ENCODE measurements at regions of chr1 and their contacts with region 1.

Region 1: DNA sequence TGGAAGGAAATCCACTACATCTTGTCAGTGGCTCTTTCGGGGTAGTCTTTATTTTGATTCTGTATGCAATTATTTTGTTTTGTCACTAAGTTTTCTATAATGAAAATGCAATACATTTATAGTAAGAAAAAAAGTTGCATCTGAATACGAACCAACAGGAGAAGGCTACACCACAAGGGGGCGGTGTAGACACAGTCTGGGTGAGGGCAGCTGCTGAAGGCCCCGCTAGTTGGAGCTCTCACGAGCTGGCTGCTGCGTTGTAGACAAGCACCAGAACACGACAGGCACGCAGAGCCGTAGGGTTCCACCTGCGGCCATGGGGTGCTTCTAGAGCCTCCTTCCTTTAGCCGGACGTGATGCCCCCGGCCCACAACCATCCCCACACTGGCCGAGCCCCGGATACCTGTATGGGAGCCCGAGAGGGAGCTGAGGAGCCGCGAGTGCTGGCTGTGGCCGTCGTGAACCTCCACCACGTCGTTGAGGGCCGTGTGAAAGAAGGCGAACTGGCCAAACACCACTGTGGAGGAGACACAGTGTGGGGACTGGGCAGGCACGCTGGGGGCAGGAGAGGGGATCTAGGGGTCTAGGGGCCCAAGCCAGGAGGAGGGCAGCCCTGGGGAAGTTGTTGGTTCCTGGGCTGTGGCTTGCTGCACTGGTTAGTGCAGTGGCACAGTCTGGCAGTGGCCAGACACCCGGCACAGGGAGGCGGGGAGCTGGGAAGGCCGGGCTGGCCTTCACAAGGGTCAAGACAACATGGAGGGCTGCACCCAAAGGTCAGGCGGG is 160.8 kb downstream of the ZSCAN20 start:
- DNase-seq: peak; percentile 96
- ATAC-seq: peak; percentile 91

Region 2: GRCh38 chr1:34742667-34743270 is 1109.6 kb after region 1 on chr1:
- intact Hi-C with region 1: loop called (anchors 2 kb)
- DNase-seq: peak; percentile 85
- ATAC-seq: peak; percentile 88